ENCODE measurements at regions of chr2 and their contacts with region 1.

Region 1: GRCh38 chr2:128748336-128748735 is 429.7 kb upstream of the HS6ST1 start:
- DNase-seq: no peak
- ATAC-seq: no peak

Region 2: GRCh38 chr2:128668946-128669345 is 79.4 kb before region 1 on chr2:
- intact Hi-C with region 1: no loop called
- DNase-seq: no peak
- ATAC-seq: no peak

Region 3: GRCh38 chr2:128714851-128715312 is 33.5 kb before region 1 on chr2:
- intact Hi-C with region 1: loop called (anchors 1 kb)
- DNase-seq: no peak
- ATAC-seq: no peak

Region 4: DNA sequence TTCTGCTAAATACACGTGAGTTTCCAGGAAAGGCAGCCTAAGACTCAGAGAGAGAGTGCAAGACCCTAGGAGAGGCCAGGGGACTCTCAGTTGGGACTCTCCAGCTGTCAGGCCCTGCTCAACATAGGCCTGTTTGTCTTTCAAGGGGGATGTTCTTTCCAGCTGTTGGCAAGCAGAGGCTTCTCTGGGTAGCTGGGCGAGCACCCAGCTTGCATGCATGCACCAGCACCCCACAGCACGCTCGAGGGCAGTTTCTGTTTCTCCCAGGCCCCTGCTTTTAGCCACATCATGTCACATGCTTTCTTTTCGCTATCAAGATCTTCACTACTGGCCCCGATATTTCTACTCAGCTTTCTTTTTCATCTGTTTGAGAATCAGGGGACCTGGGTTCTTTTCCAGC is 49.6 kb after region 1 on chr2:
- intact Hi-C with region 1: no loop called
- DNase-seq: no peak
- ATAC-seq: no peak

Measured in sciatic nerve (tissue), 2 donors.